Activated CD4-positive, alpha-beta T cell treated with anti-CD3 and anti-CD28 coated beads, Interleukin-2, amount 10 ng/mL, durations not matched to agents 24 days and 14 days (primary cell): ENCODE measurements at regions of chr1 and their contacts with region 1.

Region 1: GRCh38 chr1:211281320-211282022 is 22.3 kb downstream of the RCOR3 start:
- DNase-seq: no peak
- H3K4me3 Mint-ChIP-seq: no peak overlapping the region
- H3K27ac Mint-ChIP-seq: no peak overlapping the region
- H3K4me1 Mint-ChIP-seq: peaks cover 4% of the 10 kb centered on the region
- H3K27me3 Mint-ChIP-seq: no peaks in the 10 kb centered on the region

Region 2: GRCh38 chr1:211296396-211296795 is 14.9 kb after region 1 on chr1:
- intact Hi-C with region 1: loop called (anchors 1 kb)
- DNase-seq: no peak
- H3K4me3 Mint-ChIP-seq: no peak overlapping the region
- H3K27ac Mint-ChIP-seq: peak overlapping the region; percentile 54
- H3K4me1 Mint-ChIP-seq: peaks cover 15% of the 10 kb centered on the region
- H3K27me3 Mint-ChIP-seq: no peaks in the 10 kb centered on the region

Region 3: DNA sequence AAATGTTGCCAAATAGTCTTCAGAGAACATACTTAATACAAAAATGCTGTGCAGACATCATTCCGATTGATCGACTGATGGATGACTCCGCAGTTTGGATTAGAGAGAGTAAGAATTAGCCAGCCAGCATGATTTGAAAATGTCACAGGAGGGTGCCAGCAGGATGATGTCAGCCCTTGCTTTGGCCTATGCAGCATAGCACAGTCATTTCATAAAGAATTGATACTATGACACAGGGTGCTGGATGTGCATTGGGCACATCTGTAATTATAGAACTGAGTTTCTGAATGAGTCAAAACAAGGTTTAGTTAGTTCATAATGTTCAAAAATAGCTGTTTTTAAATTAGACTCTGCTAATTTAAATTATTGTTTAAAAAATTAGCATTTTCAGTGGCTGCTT is 23.6 kb after region 1 on chr1:
- intact Hi-C with region 1: loop called (anchors 1 kb)
- DNase-seq: no peak
- H3K4me3 Mint-ChIP-seq: no peak overlapping the region
- H3K27ac Mint-ChIP-seq: peak overlapping the region; percentile 71
- H3K4me1 Mint-ChIP-seq: peaks cover 16% of the 10 kb centered on the region
- H3K27me3 Mint-ChIP-seq: no peaks in the 10 kb centered on the region

Region 4: GRCh38 chr1:211382714-211383480 is 101.4 kb after region 1 on chr1:
- intact Hi-C with region 1: loop called (anchors 1 kb)
- DNase-seq: peak; percentile 95
- H3K4me3 Mint-ChIP-seq: peak overlapping the region; percentile 80
- H3K27ac Mint-ChIP-seq: peak overlapping the region; percentile 93
- H3K4me1 Mint-ChIP-seq: peaks cover 43% of the 10 kb centered on the region
- H3K27me3 Mint-ChIP-seq: peaks cover 6% of the 10 kb centered on the region

Region 5: GRCh38 chr1:211420389-211420788 is 138.9 kb after region 1 on chr1:
- intact Hi-C with region 1: loop called (anchors 1 kb)
- DNase-seq: no peak
- H3K4me3 Mint-ChIP-seq: no peak overlapping the region
- H3K27ac Mint-ChIP-seq: peak overlapping the region; percentile 13
- H3K4me1 Mint-ChIP-seq: peaks cover 21% of the 10 kb centered on the region
- H3K27me3 Mint-ChIP-seq: peaks cover 3% of the 10 kb centered on the region